ENCODE measurements at regions of chr19 and their contacts with region 1.

Region 1: DNA sequence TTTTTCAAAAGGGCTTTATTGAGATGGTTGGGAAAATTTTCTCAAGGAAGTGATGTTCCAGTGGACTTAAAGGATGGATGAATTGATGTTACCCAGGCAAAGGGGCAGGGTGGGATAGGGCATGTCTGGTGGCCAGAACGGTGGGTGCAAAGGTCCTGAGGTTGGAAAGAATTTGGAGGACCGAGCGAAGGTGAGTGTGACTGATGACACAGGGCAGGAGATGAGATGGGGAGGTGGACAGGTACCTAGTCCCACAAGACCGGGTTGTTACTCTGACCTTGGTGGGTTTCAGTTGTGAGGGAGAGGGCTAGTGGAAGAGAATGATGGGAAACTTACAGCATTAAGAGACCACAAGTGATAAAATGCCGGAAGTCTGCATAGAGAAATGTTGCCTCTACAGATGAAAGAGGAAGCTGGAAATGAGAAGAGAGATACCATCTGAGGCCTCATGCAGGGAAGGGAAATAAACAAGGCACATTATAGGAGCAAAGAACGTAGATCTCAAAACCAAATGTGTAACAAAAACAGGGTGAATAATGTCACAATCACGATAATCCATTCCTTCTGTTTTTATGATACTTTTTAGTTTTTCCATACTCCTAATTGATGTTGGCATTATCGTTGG is 4.5 kb downstream of the ADGRE1 start:
- DNase-seq: peak in 4 of 14 experiments; percentile 14 to 70 (median 56)
- ATAC-seq: peak; percentile 59
- H3K4me3 ChIP-seq: no peak overlapping the region
- H3K4me3 Mint-ChIP-seq: peak overlapping the region; percentile 32
- H3K27ac ChIP-seq: peak overlapping the region; percentile 39 to 64
- H3K27ac Mint-ChIP-seq: peak overlapping the region; percentile 84
- H3K4me1 ChIP-seq: peaks cover 67% of the 10 kb centered on the region
- H3K4me1 Mint-ChIP-seq: peaks cover 93% of the 10 kb centered on the region
- H3K27me3 ChIP-seq: no peaks in the 10 kb centered on the region
- H3K27me3 Mint-ChIP-seq: no peaks in the 10 kb centered on the region
- CTCF ChIP-seq: no peak

Region 2: DNA sequence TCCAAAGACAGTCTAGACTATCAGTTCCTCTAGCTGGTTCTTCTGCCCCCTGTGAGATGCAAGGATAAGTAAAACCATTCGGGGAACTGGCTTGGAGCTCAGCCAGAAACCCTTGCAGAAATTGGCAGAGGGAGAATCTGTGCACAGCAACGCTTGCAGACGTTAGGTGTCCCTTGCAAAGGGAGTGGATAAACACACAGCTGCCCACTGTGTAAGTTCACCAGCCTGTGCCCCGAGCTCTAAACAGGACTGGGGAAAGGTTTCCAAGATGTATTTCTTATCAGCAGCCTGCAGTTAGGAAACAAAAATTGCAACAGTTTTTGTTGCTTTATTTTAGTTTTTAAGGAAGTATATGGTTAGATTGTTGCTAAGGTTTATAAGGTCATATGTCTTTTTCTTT is 23.5 kb before region 1 on chr19:
- CTCF ChIA-PET with region 1: interaction called, 13 read pairs
- POLR2A ChIA-PET with region 1: interaction called, 38 read pairs
- intact Hi-C with region 1: loop called in 1 of 2 experiments (anchors 1 kb)
- DNase-seq: peak in 1 of 14 experiments; percentile 31
- ATAC-seq: no peak
- H3K4me3 ChIP-seq: no peak overlapping the region
- H3K4me3 Mint-ChIP-seq: peak overlapping the region; percentile 11
- H3K27ac ChIP-seq: no peak overlapping the region
- H3K27ac Mint-ChIP-seq: no peak overlapping the region
- H3K4me1 ChIP-seq: peaks cover 12% of the 10 kb centered on the region
- H3K4me1 Mint-ChIP-seq: peaks cover 34% of the 10 kb centered on the region
- H3K27me3 ChIP-seq: no peaks in the 10 kb centered on the region
- H3K27me3 Mint-ChIP-seq: no peaks in the 10 kb centered on the region
- CTCF ChIP-seq: no peak

Region 3: GRCh38 chr19:7069042-7069903 is 177.4 kb after region 1 on chr19 and contains the start of gene ZNF557:
- CTCF ChIA-PET with region 1: no interaction called
- POLR2A ChIA-PET with region 1: interaction called, 11 read pairs
- intact Hi-C with region 1: no loop called
- DNase-seq: peak; percentile 98 to 100 (median 99)
- ATAC-seq: peak; percentile 95
- H3K4me3 ChIP-seq: peak within 1 kb of the TSS; percentile 88
- H3K4me3 Mint-ChIP-seq: peak within 1 kb of the TSS; percentile 96
- H3K27ac ChIP-seq: peak within 1 kb of the TSS; percentile 85 to 89
- H3K27ac Mint-ChIP-seq: peak within 1 kb of the TSS; percentile 91
- H3K4me1 ChIP-seq: peaks cover 21% of the 10 kb centered on the region
- H3K4me1 Mint-ChIP-seq: peaks cover 23% of the 10 kb centered on the region
- H3K27me3 ChIP-seq: no peaks in the 10 kb centered on the region
- H3K27me3 Mint-ChIP-seq: no peaks in the 10 kb centered on the region
- CTCF ChIP-seq: no peak
- total RNA-seq, gene ZNF557: 15.8 to 17.4 TPM

Region 4: DNA sequence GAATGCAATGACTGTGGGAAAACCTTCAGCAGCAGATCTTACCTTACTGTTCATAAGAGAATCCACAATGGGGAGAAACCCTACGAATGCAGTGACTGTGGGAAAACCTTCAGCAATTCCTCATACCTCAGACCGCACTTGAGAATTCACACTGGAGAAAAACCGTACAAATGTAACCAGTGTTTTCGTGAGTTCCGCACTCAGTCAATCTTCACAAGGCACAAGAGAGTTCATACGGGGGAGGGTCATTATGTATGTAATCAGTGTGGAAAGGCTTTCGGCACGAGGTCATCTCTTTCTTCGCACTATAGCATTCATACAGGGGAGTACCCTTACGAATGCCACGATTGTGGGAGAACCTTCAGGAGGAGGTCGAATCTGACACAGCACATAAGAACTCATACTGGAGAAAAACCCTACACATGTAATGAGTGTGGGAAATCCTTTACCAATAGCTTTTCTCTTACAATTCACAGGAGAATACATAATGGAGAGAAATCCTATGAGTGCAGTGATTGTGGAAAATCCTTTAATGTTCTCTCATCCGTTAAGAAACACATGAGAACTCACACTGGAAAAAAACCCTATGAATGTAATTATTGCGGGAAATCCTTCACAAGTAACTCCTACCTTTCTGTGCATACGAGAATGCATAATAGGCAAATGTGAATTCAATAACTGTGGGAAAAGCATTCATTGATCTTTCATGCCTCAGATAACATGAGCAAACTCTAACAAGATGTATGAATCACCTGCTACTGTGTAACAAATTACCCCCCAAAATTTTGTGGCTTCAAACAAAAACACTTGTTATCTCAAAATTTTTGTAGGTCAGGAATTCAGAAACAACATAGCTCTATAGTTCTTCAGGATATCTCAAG is 191.4 kb after region 1 on chr19:
- CTCF ChIA-PET with region 1: no interaction called
- POLR2A ChIA-PET with region 1: no interaction called
- intact Hi-C with region 1: loop called in 1 of 2 experiments (anchors 5 kb)
- DNase-seq: no peak
- ATAC-seq: no peak
- H3K4me3 ChIP-seq: no peak overlapping the region
- H3K4me3 Mint-ChIP-seq: no peak overlapping the region
- H3K27ac ChIP-seq: no peak overlapping the region
- H3K27ac Mint-ChIP-seq: peak overlapping the region; percentile 6
- H3K4me1 ChIP-seq: no peaks in the 10 kb centered on the region
- H3K4me1 Mint-ChIP-seq: no peaks in the 10 kb centered on the region
- H3K27me3 ChIP-seq: no peaks in the 10 kb centered on the region
- H3K27me3 Mint-ChIP-seq: no peaks in the 10 kb centered on the region
- CTCF ChIP-seq: no peak